Aorta (tissue), 5 donors: ENCODE measurements at regions of chr15 and their contacts with region 1.

Region 1: GRCh38 chr15:50354838-50355618 is at the start of gene GABPB1:
- DNase-seq: peak; percentile 93 to 94
- ATAC-seq: peak; percentile 95
- H3K4me3 ChIP-seq: peak within 1 kb of the TSS; percentile 83 to 95
- H3K27ac ChIP-seq: peak within 1 kb of the TSS; percentile 38 to 70
- H3K4me1 ChIP-seq: no peaks in the 10 kb centered on the region
- H3K27me3 ChIP-seq: no peaks in the 10 kb centered on the region
- total RNA-seq, gene GABPB1: 14.3 to 18.5 TPM

Region 2: GRCh38 chr15:49627407-49627877 is 727.6 kb before region 1 on chr15:
- intact Hi-C with region 1: no loop called
- DNase-seq: no peak
- ATAC-seq: no peak
- H3K4me3 ChIP-seq: no peak overlapping the region
- H3K27ac ChIP-seq: no peak overlapping the region
- H3K4me1 ChIP-seq: no peaks in the 10 kb centered on the region
- H3K27me3 ChIP-seq: no peaks in the 10 kb centered on the region

Region 3: DNA sequence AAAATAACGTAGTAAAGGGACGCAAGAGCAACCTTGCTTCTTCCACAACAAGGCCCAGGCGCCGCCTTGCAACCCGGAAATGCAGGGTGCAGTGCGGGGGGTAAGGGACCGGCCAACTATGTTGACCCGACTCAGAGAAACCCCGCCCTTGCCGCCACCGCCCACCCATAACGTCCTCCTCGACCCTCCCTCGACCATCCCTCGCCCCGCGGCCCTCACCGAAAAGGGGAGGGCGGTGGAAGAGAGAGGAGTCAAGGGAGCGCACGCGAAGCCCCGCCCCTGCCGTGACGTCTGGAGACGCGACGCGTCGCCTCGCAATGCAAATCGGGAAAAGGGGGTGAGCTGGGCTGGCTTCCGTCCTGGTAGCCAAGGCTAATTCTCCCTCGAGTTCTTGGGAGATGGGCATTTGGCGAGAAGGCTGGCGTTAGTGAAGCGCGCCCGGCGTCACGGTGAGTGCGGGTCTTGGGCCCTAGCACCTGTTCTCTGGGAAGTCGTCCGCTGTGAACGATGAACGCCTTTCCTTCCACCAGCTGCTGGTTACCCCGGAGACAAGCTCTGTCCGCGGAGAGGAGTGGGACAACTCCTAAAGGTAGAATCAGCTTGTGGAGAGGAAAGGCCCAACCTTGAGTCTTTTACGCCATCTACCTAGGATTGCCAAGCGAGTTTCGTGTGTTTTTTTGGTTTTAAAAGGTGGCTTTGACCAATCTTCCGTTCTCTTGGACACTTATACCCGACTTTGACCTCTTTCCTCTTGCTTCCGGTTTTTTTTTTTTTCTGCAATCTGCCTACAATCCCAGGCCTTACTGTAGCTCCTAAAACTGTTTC is 69.2 kb after region 1 on chr15 and contains the start of gene USP8:
- intact Hi-C with region 1: loop called in 1 of 2 experiments (anchors 2 kb)
- DNase-seq: peak; percentile 98 to 99
- ATAC-seq: peak; percentile 99
- H3K4me3 ChIP-seq: peak within 1 kb of the TSS; percentile 72 to 93
- H3K27ac ChIP-seq: peak within 1 kb of the TSS in 1 of 2 donors; percentile 82
- H3K4me1 ChIP-seq: no peaks in the 10 kb centered on the region
- H3K27me3 ChIP-seq: no peaks in the 10 kb centered on the region
- total RNA-seq, gene USP8: 49.0 to 70.2 TPM

Region 4: DNA sequence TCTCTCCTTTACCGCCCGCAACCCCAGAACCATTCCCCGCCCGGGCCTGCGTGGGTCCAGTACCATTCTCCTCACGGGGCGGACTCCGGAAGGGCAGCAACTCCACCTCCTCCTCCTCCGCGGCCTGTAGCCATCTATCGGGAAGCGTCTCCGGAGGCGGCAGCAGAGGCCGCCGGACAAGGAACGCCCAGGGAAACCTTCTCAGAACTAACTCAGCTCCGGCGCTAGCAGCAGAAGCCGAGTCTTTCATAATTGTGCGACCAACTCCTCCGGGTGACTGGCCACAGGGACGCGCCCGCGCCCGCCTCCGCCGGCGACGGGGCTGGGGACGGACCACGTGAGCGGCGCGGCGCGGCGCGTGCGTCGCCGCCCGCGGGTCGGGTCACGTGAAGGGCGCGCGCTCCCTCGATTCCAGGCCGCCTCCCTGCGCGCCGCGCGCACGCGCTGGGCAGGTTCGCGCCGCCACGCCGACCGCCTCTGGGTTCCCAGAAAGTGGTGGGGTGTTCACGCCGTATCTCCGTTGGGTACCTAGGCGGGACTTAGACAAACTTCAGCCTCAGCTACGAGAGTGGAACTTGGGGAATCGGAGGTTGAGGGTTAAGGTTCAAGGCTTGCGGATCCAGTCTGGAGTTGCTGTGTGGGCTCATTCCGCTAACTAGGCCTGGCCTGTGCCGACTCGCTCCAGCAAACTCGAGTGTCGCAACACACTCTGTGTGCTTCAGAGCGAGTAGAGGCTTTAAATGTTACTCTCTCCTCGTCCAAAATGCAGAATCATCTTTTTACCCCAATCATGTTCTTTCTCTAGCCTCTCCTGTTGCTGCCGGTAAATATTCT is 331.7 kb after region 1 on chr15 and contains the start of gene TRPM7:
- intact Hi-C with region 1: loop called in 1 of 2 experiments (anchors 10 kb)
- DNase-seq: peak; percentile 94 to 96
- ATAC-seq: peak; percentile 97
- H3K4me3 ChIP-seq: peak within 1 kb of the TSS; percentile 80 to 85
- H3K27ac ChIP-seq: peak within 1 kb of the TSS; percentile 93 to 94
- H3K4me1 ChIP-seq: no peaks in the 10 kb centered on the region
- H3K27me3 ChIP-seq: no peaks in the 10 kb centered on the region
- total RNA-seq, gene TRPM7: 41.0 to 57.1 TPM